A673 (cell line): ENCODE measurements at regions of chr5 and their contacts with region 1.

Region 1: GRCh38 chr5:151164686-151165392 is 7.3 kb upstream of the ANXA6 start:
- DNase-seq: peak; percentile 80
- H3K4me3 ChIP-seq: no peak overlapping the region
- H3K27ac ChIP-seq: no peak overlapping the region
- H3K4me1 ChIP-seq: no peaks in the 10 kb centered on the region
- H3K27me3 ChIP-seq: no peaks in the 10 kb centered on the region
- CTCF ChIP-seq: peak; percentile 91

Region 2: DNA sequence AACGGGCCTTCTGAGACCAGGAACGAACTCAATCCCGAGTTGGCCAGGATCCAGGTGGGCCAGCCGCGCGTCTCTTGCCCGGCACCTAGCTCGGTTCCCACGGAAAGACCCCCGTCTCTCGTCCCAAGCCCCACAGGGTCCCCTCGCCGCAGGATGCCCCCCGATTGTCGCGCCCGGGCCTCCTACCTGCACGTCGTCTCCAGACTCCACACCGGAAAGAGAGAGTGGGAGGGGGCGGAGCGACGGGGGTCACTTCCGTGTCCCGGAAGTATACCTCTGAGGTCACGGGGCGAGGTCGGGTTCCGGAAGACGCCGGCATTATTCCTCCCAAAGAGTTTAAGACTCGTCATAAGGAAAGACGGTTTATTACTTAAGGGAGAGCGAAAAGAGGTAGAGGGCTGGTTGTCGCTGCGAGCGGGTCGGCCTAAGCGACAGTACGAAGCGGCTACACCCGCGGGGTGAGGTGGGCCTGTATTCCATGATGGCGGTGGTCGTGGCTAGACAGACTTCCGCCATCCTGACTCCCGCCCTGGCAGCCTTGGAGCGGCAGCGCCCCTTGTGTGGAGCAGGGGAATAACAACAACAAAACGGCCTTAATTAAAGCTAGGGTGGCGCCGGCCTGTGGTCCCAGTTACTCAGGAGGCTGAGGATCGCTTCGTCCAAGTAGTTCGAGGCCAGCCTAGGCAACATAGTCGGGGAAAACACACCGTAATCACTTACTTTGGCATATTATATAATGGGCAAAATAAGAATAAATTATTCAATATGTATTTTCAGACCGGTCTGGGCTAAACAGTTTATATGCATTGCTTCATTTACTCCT is 715.1 kb before region 1 on chr5 and contains the start of gene RPS14:
- CTCF ChIA-PET with region 1: interaction called, 3 read pairs
- POLR2A ChIA-PET with region 1: no interaction called
- intact Hi-C with region 1: loop called (anchors 10 kb)
- DNase-seq: peak; percentile 95
- H3K4me3 ChIP-seq: peak within 1 kb of the TSS; percentile 75
- H3K27ac ChIP-seq: peak within 1 kb of the TSS; percentile 96
- H3K4me1 ChIP-seq: peaks cover 19% of the 10 kb centered on the region
- H3K27me3 ChIP-seq: no peaks in the 10 kb centered on the region
- CTCF ChIP-seq: peak; percentile 93
- total RNA-seq, gene RPS14: 1,789 and 1,909 TPM in 2 replicates

Region 3: DNA sequence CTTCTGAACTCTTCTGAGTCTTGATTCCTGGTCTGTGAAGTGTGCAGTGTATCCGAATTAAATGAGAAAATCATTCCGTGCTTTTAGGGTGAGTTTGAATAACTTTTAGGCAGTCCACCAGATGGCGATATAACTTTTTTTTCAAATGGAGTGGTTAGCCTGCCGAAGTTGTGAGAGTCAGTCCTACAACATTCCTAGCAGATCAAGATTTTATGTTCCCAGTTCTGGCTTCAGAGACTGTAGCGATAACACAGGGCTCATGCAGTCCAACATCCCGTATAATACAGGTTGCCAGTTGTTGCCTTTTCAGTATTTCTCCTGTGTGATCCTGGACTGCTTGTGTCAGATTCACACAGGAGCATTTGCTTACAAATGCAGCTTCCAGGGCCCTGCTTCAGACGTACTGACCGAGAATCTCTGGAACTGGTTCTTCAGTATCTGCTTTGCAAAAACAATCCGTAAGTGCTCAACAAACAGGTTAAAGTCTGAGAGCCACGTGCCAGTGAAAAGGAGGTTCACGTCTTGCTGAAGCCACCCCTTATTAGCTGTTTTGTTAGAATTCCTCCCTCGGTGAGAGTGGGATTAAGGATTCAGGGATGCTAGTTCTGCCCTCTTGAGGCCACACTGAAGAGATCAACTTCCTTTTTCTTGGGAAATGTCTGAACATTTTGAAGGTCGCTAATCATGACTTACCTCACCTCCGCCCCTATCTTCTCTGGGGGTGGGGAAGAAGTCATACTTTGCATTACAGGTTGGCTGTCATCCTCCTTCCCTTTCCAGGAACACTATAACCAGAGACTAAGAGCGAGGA is 363.5 kb before region 1 on chr5:
- CTCF ChIA-PET with region 1: interaction called, 14 read pairs
- POLR2A ChIA-PET with region 1: no interaction called
- intact Hi-C with region 1: loop called (anchors 2 kb)
- DNase-seq: peak; percentile 83
- H3K4me3 ChIP-seq: peak overlapping the region; percentile 42
- H3K27ac ChIP-seq: no peak overlapping the region
- H3K4me1 ChIP-seq: no peaks in the 10 kb centered on the region
- H3K27me3 ChIP-seq: no peaks in the 10 kb centered on the region
- CTCF ChIP-seq: peak; percentile 59

Region 4: GRCh38 chr5:151002250-151002649 is 162.6 kb before region 1 on chr5:
- CTCF ChIA-PET with region 1: interaction called, 10 read pairs
- POLR2A ChIA-PET with region 1: no interaction called
- intact Hi-C with region 1: loop called (anchors 2 kb)
- DNase-seq: peak; percentile 38
- H3K4me3 ChIP-seq: no peak overlapping the region
- H3K27ac ChIP-seq: no peak overlapping the region
- H3K4me1 ChIP-seq: no peaks in the 10 kb centered on the region
- H3K27me3 ChIP-seq: no peaks in the 10 kb centered on the region
- CTCF ChIP-seq: peak; percentile 44; the same call in 1 of the 2 replicates

Region 5: GRCh38 chr5:151051066-151051930 is 113.5 kb before region 1 on chr5:
- CTCF ChIA-PET with region 1: interaction called, 14 read pairs
- POLR2A ChIA-PET with region 1: no interaction called
- intact Hi-C with region 1: loop called (anchors 2 kb)
- DNase-seq: peak; percentile 72
- H3K4me3 ChIP-seq: no peak overlapping the region
- H3K27ac ChIP-seq: no peak overlapping the region
- H3K4me1 ChIP-seq: no peaks in the 10 kb centered on the region
- H3K27me3 ChIP-seq: no peaks in the 10 kb centered on the region
- CTCF ChIP-seq: peak; percentile 83

Region 6: GRCh38 chr5:151126199-151126645 is 38.6 kb before region 1 on chr5:
- CTCF ChIA-PET with region 1: interaction called, 20 read pairs
- POLR2A ChIA-PET with region 1: no interaction called
- intact Hi-C with region 1: loop called (anchors 1 kb)
- DNase-seq: peak; percentile 28
- H3K4me3 ChIP-seq: no peak overlapping the region
- H3K27ac ChIP-seq: no peak overlapping the region
- H3K4me1 ChIP-seq: peaks cover 13% of the 10 kb centered on the region
- H3K27me3 ChIP-seq: no peaks in the 10 kb centered on the region
- CTCF ChIP-seq: peak; percentile 88